ENCODE measurements at regions of chr2 and their contacts with region 1.

Region 1: DNA sequence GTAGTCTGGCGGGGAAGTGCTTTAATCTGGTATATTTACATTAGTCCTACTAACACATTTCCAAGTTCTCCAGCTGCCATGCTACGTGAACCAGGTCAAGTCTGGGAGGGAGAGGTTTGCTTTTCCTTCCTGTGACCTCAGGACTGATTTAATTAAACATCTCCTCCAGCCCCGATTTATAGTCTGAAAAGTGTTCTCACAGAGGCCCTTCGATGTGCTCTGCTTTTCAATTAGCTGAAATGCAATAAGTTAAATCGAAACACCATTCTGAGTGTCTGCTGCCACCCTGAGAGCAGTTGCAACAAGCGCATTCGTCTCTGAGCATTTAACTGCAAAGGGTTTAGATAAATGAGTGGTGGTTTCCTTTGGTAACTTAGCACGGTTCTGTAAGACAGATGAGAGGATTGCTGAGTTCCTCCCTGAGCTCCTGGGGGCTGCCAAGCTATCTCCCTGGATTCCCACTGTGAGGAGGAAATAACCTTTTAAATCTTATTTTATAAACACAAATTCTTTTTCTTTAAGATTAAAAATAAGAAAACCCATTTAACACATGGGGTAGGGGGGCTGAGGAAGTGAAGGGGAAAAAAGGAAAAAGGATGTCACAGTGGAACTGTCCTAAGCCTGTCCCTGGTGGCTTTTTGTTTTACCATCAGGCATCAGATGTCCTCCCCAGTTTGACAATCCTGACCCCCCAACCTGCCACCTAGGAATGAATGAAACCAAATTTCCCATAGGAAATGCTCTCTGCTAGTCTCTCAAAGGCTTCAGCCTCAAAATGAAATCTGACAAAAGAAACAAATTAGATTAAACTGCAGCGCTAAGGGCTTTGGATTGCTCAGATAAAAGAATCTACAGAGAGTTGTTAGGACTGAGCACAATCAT is 56.5 kb upstream of the CREB1 start:
- DNase-seq: peak; percentile 21
- H3K4me3 ChIP-seq: no peak overlapping the region
- H3K27ac ChIP-seq: no peak overlapping the region
- H3K4me1 ChIP-seq: no peaks in the 10 kb centered on the region
- H3K27me3 ChIP-seq: no peaks in the 10 kb centered on the region
- CTCF ChIP-seq: peak in 3 of 4 experiments; percentile 21 to 58 (median 49)
- POLR2A ChIP-seq: no peak

Region 2: DNA sequence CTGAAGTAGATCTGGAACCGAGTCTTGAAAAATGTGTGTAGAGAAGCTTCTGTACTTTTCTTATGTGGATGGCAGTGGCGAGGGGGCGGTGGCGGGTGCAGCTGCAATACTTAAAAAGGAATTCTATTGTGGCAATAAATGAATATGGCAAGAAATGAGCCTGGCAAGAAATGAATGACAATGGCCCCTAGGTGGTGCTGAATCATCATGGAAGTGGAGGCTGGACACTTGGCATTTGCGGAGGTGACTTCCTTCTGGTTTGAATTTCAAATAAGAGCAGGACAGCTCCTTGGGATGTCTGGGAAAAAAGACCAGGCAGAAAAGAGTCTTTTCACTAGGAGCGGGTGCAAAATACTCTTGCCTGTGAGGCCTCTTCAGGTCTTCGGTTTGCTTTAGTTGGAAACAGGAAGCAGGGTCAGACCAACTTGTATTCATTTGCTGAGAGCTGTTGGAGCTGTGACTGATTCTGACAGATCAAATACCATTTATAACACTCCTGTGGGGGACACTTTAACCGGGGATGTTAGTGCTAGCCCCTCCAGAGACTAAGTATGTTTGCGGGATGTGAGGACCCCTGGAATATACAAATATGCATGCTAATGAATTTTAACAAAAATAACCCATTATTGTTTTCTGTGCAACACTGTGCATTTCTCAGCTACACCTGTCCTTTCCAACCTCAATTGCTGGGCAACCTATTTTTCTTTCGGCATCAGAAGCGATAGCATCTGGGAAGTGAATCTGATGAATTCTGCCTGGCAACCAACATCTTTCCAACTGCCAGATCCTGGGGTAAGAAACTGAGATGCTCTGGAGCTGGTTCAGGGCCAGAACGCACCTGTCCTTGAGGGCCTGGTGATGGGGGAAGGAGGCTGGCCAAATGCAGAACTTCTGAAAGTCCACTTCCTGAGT is 672.5 kb before region 1 on chr2:
- intact Hi-C with region 1: loop called (anchors 1 kb)
- DNase-seq: peak; percentile 57
- H3K4me3 ChIP-seq: no peak overlapping the region
- H3K27ac ChIP-seq: no peak overlapping the region
- H3K4me1 ChIP-seq: no peaks in the 10 kb centered on the region
- H3K27me3 ChIP-seq: no peaks in the 10 kb centered on the region
- CTCF ChIP-seq: peak; percentile 18 to 72 (median 60)
- POLR2A ChIP-seq: no peak

Measured in prostate gland (tissue), 2 donors.